A673 (cell line): ENCODE measurements at regions of chr15 and their contacts with region 1.

Region 1: GRCh38 chr15:54017959-54018358 is 39.7 kb downstream of the UNC13C start:
- DNase-seq: no peak
- H3K4me3 ChIP-seq: no peak overlapping the region
- H3K27ac ChIP-seq: no peak overlapping the region
- H3K4me1 ChIP-seq: no peaks in the 10 kb centered on the region
- H3K27me3 ChIP-seq: no peaks in the 10 kb centered on the region
- CTCF ChIP-seq: no peak

Region 2: GRCh38 chr15:53569751-53570480 is 448.0 kb before region 1 on chr15:
- CTCF ChIA-PET with region 1: no interaction called
- POLR2A ChIA-PET with region 1: no interaction called
- intact Hi-C with region 1: no loop called
- DNase-seq: no peak
- H3K4me3 ChIP-seq: no peak overlapping the region
- H3K27ac ChIP-seq: no peak overlapping the region
- H3K4me1 ChIP-seq: no peaks in the 10 kb centered on the region
- H3K27me3 ChIP-seq: no peaks in the 10 kb centered on the region
- CTCF ChIP-seq: no peak

Region 3: DNA sequence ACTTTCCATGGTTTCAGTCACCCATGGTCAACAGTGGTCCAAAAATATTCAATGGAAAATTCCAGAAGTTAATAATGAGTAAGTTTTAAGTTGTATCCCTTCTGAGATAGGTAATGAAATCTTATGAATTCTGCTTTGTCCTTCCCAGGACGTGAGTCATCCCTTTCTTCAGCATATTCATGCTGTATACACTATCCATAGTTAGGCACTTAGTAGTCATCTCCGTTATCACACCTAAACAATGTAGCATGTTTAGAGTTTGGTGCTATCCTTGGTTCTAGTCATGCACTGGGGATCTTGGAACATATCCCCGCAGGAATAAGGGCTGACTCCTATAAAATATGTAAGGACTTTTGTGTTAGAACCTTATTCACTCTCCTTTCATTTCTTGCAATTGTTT is 113.5 kb after region 1 on chr15:
- CTCF ChIA-PET with region 1: no interaction called
- POLR2A ChIA-PET with region 1: interaction called, 10 read pairs
- intact Hi-C with region 1: no loop called
- DNase-seq: no peak
- H3K4me3 ChIP-seq: no peak overlapping the region
- H3K27ac ChIP-seq: no peak overlapping the region
- H3K4me1 ChIP-seq: no peaks in the 10 kb centered on the region
- H3K27me3 ChIP-seq: no peaks in the 10 kb centered on the region
- CTCF ChIP-seq: no peak